Natural killer cell (primary cell): ENCODE measurements at regions of chr1 and their contacts with region 1.

Region 1: GRCh38 chr1:28642847-28643635 is at the start of gene TAF12:
- DNase-seq: peak; percentile 82 to 98
- ATAC-seq: peak; percentile 78 to 93 (median 85)
- H3K4me3 ChIP-seq: peak within 1 kb of the TSS; percentile 71
- H3K4me3 Mint-ChIP-seq: peak within 1 kb of the TSS; percentile 100
- H3K27ac ChIP-seq: peak within 1 kb of the TSS; percentile 98
- H3K27ac Mint-ChIP-seq: peak within 1 kb of the TSS; percentile 98 to 99
- H3K4me1 ChIP-seq: peaks cover 34% of the 10 kb centered on the region
- H3K4me1 Mint-ChIP-seq: peaks cover 36 to 46% of the 10 kb centered on the region in 2 donors
- H3K27me3 ChIP-seq: no peaks in the 10 kb centered on the region
- H3K27me3 Mint-ChIP-seq: no peaks in the 10 kb centered on the region
- CTCF ChIP-seq: peak; percentile 15
- total RNA-seq, gene TAF12: 17.9 to 23.8 (median 23.1) TPM

Region 2: GRCh38 chr1:28668191-28668955 is 25.3 kb after region 1 on chr1 and contains the start of gene GMEB1:
- intact Hi-C with region 1: loop called (anchors 1 kb)
- DNase-seq: peak; percentile 85 to 91
- ATAC-seq: peak; percentile 66 to 83 (median 78)
- H3K4me3 ChIP-seq: peak within 1 kb of the TSS; percentile 94
- H3K4me3 Mint-ChIP-seq: peak within 1 kb of the TSS; percentile 93
- H3K27ac ChIP-seq: peak within 1 kb of the TSS; percentile 97
- H3K27ac Mint-ChIP-seq: peak within 1 kb of the TSS; percentile 91 to 97
- H3K4me1 ChIP-seq: peaks cover 22% of the 10 kb centered on the region
- H3K4me1 Mint-ChIP-seq: peaks cover 14 to 15% of the 10 kb centered on the region in 2 donors
- H3K27me3 ChIP-seq: no peaks in the 10 kb centered on the region
- H3K27me3 Mint-ChIP-seq: no peaks in the 10 kb centered on the region
- CTCF ChIP-seq: no peak
- total RNA-seq, gene GMEB1: 26.1 to 29.1 (median 28.3) TPM

Region 3: DNA sequence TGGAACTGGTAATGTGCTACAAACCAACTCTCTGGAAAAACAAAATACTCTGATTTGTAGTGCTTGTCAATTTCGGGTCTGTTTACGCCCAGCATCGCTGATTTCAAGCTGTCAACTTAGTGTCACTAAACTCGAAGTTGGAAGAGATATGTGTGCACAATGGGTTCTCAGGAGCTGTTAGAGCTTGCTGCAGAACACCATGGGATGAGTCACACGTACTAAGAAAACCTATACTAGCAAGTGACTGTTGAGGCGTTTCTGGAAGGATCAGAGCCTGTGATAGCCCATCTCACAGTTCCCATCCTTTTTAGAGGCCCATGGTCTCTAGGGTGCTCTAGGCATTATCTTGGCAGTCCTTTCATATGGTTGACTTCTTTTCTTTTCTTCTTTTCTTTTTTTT is 39.8 kb after region 1 on chr1:
- intact Hi-C with region 1: loop called (anchors 5 kb)
- DNase-seq: no peak
- ATAC-seq: no peak
- H3K4me3 ChIP-seq: no peak overlapping the region
- H3K4me3 Mint-ChIP-seq: no peak overlapping the region
- H3K27ac ChIP-seq: no peak overlapping the region
- H3K27ac Mint-ChIP-seq: no peak overlapping the region
- H3K4me1 ChIP-seq: no peaks in the 10 kb centered on the region
- H3K4me1 Mint-ChIP-seq: peaks cover 5 to 9% of the 10 kb centered on the region in 2 donors
- H3K27me3 ChIP-seq: no peaks in the 10 kb centered on the region
- H3K27me3 Mint-ChIP-seq: no peaks in the 10 kb centered on the region
- CTCF ChIP-seq: no peak

Region 4: DNA sequence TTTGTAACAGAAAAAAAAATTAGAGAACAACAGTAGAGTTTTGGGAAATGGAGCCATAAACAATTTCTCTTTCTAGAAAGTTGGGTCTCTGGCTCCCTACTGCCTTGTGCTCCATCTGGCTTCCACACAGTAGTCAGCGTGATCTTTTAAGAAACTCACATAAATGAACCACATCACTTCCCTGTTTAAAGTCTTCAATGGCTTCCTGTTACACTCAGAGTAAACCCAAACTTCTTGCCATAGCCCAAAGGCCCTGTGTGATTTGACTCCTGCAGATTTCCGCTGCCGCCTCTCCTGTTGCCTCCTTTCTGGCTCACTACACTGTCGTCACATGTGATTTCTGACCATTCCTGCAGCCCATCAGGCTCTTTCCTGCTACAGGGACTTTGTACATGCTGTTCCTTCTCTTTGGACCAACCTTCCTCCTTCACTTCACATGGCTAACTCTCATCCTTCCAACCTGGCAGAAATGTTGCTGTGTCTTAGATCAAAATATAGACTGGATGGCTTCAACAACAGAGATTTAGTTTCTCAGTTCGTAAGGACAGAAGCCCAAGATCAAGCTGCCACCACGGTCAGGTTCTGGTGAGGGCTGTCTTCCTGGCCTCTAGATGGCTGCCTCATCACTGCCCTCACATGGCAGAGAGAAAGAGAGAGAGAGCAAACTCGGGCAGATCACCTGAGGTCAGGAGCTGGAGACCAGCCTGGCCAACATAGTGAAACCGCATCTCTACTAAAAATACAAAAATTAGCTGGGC is 202.9 kb after region 1 on chr1:
- intact Hi-C with region 1: no loop called
- DNase-seq: peak in 1 of 2 donors; percentile 23
- ATAC-seq: peak in 1 of 3 donors; percentile 40
- H3K4me3 ChIP-seq: no peak overlapping the region
- H3K4me3 Mint-ChIP-seq: no peak overlapping the region
- H3K27ac ChIP-seq: no peak overlapping the region
- H3K27ac Mint-ChIP-seq: peak overlapping the region; percentile 10 to 28
- H3K4me1 ChIP-seq: no peaks in the 10 kb centered on the region
- H3K4me1 Mint-ChIP-seq: no peaks in the 10 kb centered on the region
- H3K27me3 ChIP-seq: no peaks in the 10 kb centered on the region
- H3K27me3 Mint-ChIP-seq: peaks cover 0 to 13% of the 10 kb centered on the region in 2 donors
- CTCF ChIP-seq: no peak